ENCODE measurements at regions of chr18 and their contacts with region 1.

Region 1: DNA sequence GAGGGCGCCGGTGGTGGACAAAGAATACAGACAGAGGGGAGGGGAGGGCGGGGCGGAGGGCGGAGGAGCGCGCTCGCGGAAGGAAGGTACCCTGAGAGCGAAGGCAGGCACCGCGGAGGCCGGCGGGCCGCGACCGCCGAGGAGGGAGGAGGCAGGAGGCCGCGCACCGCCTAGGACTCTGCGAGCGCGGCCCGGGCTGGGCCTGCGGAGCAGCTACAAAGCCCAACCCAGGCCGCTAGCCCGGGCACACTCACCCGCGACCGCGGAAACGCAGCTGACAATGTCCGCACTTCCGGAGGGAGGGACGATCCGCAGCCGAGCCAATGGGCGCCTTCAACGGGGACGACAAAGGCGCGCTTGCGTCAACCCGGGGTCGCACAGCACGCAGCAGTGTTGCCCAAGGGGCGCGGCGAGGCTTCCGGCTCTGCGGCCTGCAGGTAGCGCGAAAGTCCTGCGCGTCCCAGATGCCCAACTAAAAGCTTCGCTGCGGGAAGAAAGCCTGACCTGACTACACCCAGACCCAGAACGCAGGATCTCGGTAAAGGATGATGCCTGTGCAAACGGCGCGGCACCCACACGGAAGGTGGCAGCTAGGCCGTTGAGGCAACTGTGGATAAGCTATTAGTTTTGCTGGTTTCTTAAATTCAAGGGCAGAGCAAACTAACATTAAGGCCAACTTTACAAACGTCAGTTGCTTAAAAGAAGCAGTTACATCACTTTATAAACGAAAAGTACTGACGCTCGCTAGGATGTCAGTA is at the start of gene C18orf32:
- H3K4me3 Mint-ChIP-seq: peak within 1 kb of the TSS; percentile 89
- H3K27ac Mint-ChIP-seq: peak within 1 kb of the TSS; percentile 92
- H3K4me1 Mint-ChIP-seq: peaks cover 52% of the 10 kb centered on the region
- H3K27me3 Mint-ChIP-seq: no peaks in the 10 kb centered on the region

Region 2: DNA sequence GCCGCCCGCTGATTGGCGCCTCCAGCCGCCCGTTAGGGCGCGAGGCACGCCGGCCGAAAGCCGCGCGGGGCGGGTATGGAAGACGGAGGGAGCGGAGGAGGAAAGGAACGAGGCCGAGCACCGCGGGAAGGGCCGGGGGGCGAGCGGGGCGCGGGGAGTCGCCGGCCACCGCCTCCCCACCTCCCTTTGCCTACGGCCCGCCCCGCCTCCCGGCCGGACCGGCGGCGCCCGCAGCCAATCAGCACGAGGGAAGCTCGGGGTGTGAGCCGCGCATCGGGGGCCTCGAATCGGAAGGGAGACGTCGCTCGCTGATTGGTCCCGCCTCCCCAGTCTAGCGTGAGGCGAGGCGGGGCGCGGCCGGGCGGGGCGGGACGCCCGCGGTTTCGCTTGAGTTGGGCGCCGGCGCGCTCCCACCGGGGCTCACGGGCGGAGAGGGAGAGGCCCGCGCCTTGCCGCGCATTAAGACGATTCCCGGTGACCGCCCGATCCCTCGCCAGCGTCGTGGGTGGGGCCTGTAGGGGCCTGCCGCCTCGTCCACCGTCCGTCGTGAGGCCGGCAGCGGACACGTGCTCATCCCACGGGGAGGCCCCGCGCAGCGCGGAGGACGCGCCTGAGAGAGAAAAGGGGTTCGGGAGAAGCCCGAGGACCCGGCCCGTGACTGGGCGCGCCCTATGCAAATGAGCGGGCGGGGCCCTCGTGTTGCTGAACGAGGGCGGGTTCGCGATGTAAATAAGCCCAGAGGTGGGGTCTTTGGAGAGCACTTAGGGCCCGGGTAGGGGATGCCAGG is 1556.0 kb before region 1 on chr18:
- intact Hi-C with region 1: loop called (anchors 5 kb)
- H3K4me3 Mint-ChIP-seq: peak overlapping the region; percentile 81
- H3K27ac Mint-ChIP-seq: peak overlapping the region; percentile 93
- H3K4me1 Mint-ChIP-seq: peaks cover 42% of the 10 kb centered on the region
- H3K27me3 Mint-ChIP-seq: no peaks in the 10 kb centered on the region

Region 3: GRCh38 chr18:48540251-48541025 is 946.7 kb before region 1 on chr18:
- intact Hi-C with region 1: loop called (anchors 10 kb)
- H3K4me3 Mint-ChIP-seq: peak overlapping the region; percentile 94
- H3K27ac Mint-ChIP-seq: peak overlapping the region; percentile 85
- H3K4me1 Mint-ChIP-seq: peaks cover 23% of the 10 kb centered on the region
- H3K27me3 Mint-ChIP-seq: peaks cover 8% of the 10 kb centered on the region

Region 4: GRCh38 chr18:49459404-49460171 is 27.5 kb before region 1 on chr18:
- intact Hi-C with region 1: loop called (anchors 1 kb)
- H3K4me3 Mint-ChIP-seq: peak overlapping the region; percentile 89
- H3K27ac Mint-ChIP-seq: peak overlapping the region; percentile 87
- H3K4me1 Mint-ChIP-seq: peaks cover 39% of the 10 kb centered on the region
- H3K27me3 Mint-ChIP-seq: no peaks in the 10 kb centered on the region

Region 5: GRCh38 chr18:49813319-49814146 is 326.4 kb after region 1 on chr18 and contains the start of gene ACAA2:
- intact Hi-C with region 1: loop called (anchors 2 kb)
- H3K4me3 Mint-ChIP-seq: peak within 1 kb of the TSS; percentile 87
- H3K27ac Mint-ChIP-seq: peak within 1 kb of the TSS; percentile 96
- H3K4me1 Mint-ChIP-seq: peaks cover 38% of the 10 kb centered on the region
- H3K27me3 Mint-ChIP-seq: no peaks in the 10 kb centered on the region

Region 6: DNA sequence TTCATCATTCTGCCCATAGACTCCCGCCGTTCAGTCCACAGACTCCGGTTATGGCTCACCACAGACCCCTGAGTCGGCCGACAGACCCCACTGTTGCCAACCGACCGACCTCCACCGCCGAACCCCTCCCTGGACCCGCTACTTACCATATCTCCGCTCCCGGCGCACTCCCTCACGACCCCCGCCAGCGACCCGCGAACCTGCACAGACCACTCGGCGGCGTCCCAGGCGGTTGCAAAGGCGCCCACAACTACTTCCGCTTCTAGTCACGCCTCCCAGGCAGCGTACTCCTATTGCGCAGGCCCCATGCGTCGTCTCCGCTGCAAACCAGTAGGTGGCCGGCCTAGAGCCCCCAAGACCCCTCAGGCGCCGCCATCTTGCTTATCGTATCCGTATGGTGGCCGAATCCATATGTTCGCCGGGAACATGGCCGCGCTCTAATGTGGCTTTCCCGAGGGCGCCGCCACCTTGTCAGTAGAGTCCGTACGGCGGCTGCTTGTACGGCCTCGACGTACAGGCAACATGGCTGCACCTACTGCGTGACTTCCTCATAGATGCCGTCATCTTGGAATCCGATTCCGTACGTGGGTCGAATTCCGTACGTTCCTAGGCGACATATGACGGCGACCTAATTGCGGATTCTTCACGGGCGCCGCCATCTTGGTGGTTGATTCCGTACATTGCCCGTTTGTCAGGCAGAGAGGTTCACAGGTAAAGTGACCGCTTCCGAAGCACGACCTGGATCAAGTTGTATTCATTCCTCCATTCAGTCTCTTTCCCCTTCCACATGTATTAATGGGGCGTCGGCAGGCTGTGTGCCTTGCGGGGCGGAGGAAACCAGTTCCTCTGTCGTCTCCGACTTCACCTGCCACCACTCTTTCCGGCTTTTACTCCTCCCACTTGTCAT is 800.6 kb after region 1 on chr18 and contains the start of gene CXXC1:
- intact Hi-C with region 1: loop called (anchors 10 kb)
- H3K4me3 Mint-ChIP-seq: peak within 1 kb of the TSS; percentile 92
- H3K27ac Mint-ChIP-seq: peak within 1 kb of the TSS; percentile 90
- H3K4me1 Mint-ChIP-seq: peaks cover 49% of the 10 kb centered on the region
- H3K27me3 Mint-ChIP-seq: no peaks in the 10 kb centered on the region

Region 7: GRCh38 chr18:51029694-51030536 is 1542.8 kb after region 1 on chr18 and contains the start of gene SMAD4:
- intact Hi-C with region 1: loop called (anchors 10 kb)
- H3K4me3 Mint-ChIP-seq: peak within 1 kb of the TSS; percentile 97
- H3K27ac Mint-ChIP-seq: peak within 1 kb of the TSS; percentile 97
- H3K4me1 Mint-ChIP-seq: peaks cover 50% of the 10 kb centered on the region
- H3K27me3 Mint-ChIP-seq: no peaks in the 10 kb centered on the region